ENCODE measurements at regions of chr2 and their contacts with region 1.

Region 1: GRCh38 chr2:33372940-33373553 is 103.4 kb upstream of the RASGRP3 start:
- DNase-seq: peak; percentile 27 to 56 (median 34)
- ATAC-seq: peak; percentile 65
- H3K4me3 ChIP-seq: no peak overlapping the region
- H3K27ac ChIP-seq: no peak overlapping the region
- H3K4me1 ChIP-seq: no peaks in the 10 kb centered on the region
- H3K27me3 ChIP-seq: no peaks in the 10 kb centered on the region
- CTCF ChIP-seq: peak; percentile 52 to 91 (median 74)
- POLR2A ChIP-seq: no peak

Region 2: DNA sequence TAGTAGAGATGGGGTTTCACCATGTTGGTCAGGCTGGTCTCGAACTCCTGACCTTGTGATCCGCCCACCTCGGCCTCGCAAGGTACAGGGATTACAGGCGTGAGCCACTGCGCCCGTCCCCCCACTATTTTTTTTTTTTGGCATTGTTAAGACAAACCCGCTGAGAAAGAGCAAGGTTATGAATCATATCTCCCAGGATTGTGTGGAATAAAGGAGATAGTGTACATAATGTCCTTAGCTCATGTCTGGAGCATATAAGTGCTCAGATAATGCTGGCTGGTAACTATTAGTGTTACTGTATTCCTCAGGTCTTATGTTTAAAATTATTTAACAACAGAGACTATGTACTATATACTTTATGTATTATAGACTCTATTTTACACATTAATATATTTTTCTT is 709.2 kb before region 1 on chr2:
- intact Hi-C with region 1: no loop called
- DNase-seq: no peak
- ATAC-seq: no peak
- H3K4me3 ChIP-seq: no peak overlapping the region
- H3K27ac ChIP-seq: no peak overlapping the region
- H3K4me1 ChIP-seq: no peaks in the 10 kb centered on the region
- H3K27me3 ChIP-seq: no peaks in the 10 kb centered on the region
- CTCF ChIP-seq: no peak
- POLR2A ChIP-seq: no peak

Region 3: DNA sequence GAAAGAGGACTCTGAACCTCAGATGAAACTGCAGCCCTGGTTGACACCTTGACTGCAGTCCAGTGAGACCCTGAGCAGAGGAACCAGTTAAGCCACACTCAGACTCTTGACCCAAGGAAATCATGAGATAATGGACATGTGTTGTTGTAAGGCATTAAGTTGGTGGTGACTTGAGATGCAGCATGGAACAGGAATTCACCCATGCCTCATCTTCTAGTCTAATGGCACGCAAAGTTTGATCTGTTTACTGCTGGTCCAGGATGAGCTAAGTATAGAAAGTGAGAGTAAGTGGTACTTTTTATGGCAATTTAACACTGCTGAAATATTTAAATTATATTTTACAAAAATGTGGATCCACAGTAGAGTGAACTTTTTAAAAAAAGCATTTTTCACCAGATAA is 477.6 kb before region 1 on chr2:
- intact Hi-C with region 1: no loop called
- DNase-seq: no peak
- ATAC-seq: no peak
- H3K4me3 ChIP-seq: no peak overlapping the region
- H3K27ac ChIP-seq: no peak overlapping the region
- H3K4me1 ChIP-seq: no peaks in the 10 kb centered on the region
- H3K27me3 ChIP-seq: no peaks in the 10 kb centered on the region
- CTCF ChIP-seq: no peak
- POLR2A ChIP-seq: no peak

Region 4: GRCh38 chr2:33033606-33034081 is 339.4 kb before region 1 on chr2:
- intact Hi-C with region 1: loop called (anchors 10 kb)
- DNase-seq: no peak
- ATAC-seq: peak; percentile 35
- H3K4me3 ChIP-seq: no peak overlapping the region
- H3K27ac ChIP-seq: no peak overlapping the region
- H3K4me1 ChIP-seq: peaks cover 3% of the 10 kb centered on the region
- H3K27me3 ChIP-seq: no peaks in the 10 kb centered on the region
- CTCF ChIP-seq: peak in 6 of 7 experiments; percentile 19 to 76 (median 52)
- POLR2A ChIP-seq: no peak